Naive thymus-derived CD8-positive, alpha-beta T cell (primary cell): ENCODE measurements at regions of chr4 and their contacts with region 1.

Region 1: DNA sequence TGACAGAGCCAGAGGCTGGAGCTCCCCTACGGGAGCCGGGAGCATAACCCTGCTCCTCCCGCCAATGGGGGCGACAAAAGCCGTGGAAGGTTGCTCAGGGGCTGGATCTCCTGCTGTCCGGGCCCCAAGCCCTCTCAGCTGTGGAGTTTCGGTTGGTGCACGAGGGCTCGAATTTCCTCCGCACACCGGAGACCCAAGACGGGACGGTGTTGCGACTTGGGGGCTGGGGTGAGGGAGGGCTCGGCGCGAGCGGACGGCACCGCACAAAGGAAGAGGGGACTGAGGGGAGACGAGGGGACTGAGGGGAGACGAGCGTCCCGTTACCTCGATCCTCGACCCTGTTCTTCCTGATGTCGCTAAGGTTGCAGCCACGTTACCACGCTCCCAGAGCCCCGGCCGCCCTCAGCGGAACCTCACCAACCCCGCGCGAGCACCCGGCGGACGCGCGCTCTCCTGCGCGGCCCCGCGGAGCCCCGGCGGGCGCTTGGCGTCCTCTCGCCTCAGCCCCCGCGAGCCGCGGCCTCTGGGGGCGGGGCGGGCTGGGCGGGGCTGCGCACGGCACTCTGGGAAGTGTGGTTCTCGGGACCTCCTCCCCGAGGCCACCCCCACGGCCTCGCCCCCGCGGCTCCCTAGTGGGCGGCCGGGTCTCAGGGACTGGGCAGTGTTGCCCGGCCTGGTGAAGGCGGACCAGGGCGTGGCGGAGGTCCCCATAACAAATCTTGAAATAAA is at the start of gene KLHL8:
- DNase-seq: peak; percentile 80 to 91 (median 86)
- ATAC-seq: peak; percentile 84 to 87
- H3K4me3 Mint-ChIP-seq: peak within 1 kb of the TSS; percentile 92 to 97 (median 94)
- H3K27ac Mint-ChIP-seq: peak within 1 kb of the TSS; percentile 59 to 97 (median 96)
- H3K4me1 Mint-ChIP-seq: peaks cover 11 to 23% (median 18%) of the 10 kb centered on the region in 4 donors
- H3K27me3 Mint-ChIP-seq: no peaks in the 10 kb centered on the region
- polyA plus RNA-seq, gene KLHL8: 10.3 to 13.7 (median 12.7) TPM

Region 2: DNA sequence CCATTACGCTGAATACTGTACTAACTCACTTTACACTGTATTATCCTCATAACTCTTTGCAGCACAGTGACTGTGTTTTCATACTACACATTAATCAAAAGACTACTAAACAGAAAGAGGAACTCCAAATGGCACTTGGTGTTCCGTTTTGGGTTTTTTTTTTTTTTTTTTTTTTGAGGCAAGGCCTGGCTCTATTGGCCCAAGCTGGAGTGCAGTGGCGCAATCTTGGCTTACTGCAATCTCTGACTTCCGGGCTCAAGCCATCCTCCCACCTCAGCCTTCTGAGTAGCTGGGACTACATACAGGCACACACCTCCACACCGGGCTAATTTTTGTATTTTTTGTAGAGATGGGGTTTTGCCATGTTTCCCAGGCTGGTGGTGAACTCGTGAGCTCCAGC is 10.6 kb before region 1 on chr4:
- POLR2A ChIA-PET with region 1: interaction called, 10 read pairs
- DNase-seq: peak in 7 of 10 donors; percentile 9 to 38 (median 20)
- ATAC-seq: peak; percentile 91 to 92
- H3K4me3 Mint-ChIP-seq: peak overlapping the region; percentile 2 to 79 (median 66)
- H3K27ac Mint-ChIP-seq: peak overlapping the region in 7 of 10 donors; percentile 40 to 88 (median 78)
- H3K4me1 Mint-ChIP-seq: peaks cover 16 to 31% (median 23%) of the 10 kb centered on the region in 4 donors
- H3K27me3 Mint-ChIP-seq: no peaks in the 10 kb centered on the region